CD8-positive, alpha-beta T cell (primary cell): ENCODE measurements at regions of chr16 and their contacts with region 1.

Region 1: GRCh38 chr16:50731130-50731988 is 10.5 kb upstream of the CYLD start:
- DNase-seq: peak in 2 of 9 experiments; percentile 35 to 54
- ATAC-seq: no peak
- H3K4me3 ChIP-seq: no peak overlapping the region
- H3K4me3 Mint-ChIP-seq: no peak overlapping the region
- H3K27ac ChIP-seq: no peak overlapping the region
- H3K27ac Mint-ChIP-seq: peak overlapping the region; percentile 50
- H3K4me1 ChIP-seq: peaks cover 4% of the 10 kb centered on the region
- H3K4me1 Mint-ChIP-seq: peaks cover 11% of the 10 kb centered on the region
- H3K27me3 ChIP-seq: no peaks in the 10 kb centered on the region
- H3K27me3 Mint-ChIP-seq: no peaks in the 10 kb centered on the region
- CTCF ChIP-seq: no peak

Region 2: DNA sequence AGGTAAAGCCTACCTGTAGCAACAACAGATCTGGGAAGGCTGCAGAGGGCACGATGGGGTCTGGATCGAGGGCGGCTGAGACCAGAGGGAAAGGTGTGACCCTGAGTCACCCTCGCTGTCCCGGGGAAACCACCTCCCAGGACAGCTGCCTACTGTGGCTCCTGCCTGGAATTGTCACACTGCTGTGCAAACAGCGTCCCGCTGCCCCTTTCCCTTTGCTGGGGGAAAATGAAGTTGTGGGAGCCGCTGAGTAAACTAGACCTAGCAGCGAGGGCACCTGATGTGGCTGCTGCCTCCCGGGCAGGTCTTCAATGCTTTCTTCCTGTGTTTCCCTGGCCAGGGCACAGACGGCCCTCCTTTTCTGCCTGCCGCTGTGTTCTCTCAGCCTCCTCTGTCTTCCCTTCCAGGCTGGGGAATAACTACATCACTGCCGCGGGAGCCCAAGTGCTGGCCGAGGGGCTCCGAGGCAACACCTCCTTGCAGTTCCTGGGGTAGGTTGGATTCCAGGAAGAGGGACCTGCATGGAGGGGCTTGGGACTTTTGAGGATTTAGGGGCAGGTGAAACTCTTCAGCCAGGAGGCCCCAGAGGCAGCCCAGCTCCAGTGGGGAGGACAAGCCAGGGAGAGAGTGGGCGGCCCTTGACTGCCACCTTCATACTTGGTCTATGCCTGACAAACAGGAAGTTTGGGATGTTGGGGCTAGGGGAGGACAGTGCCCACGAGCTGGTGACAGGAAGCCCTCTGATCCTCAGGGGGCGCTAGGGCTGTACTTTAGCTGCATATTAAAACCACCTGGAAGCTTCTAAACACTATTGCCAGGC is 11.6 kb before region 1 on chr16:
- CTCF ChIA-PET with region 1: interaction called, 14 read pairs
- POLR2A ChIA-PET with region 1: no interaction called
- intact Hi-C with region 1: no loop called
- DNase-seq: peak in 6 of 9 experiments; percentile 23 to 71 (median 46)
- ATAC-seq: peak; percentile 67
- H3K4me3 ChIP-seq: no peak overlapping the region
- H3K4me3 Mint-ChIP-seq: no peak overlapping the region
- H3K27ac ChIP-seq: no peak overlapping the region
- H3K27ac Mint-ChIP-seq: no peak overlapping the region
- H3K4me1 ChIP-seq: peaks cover 26% of the 10 kb centered on the region
- H3K4me1 Mint-ChIP-seq: peaks cover 37% of the 10 kb centered on the region
- H3K27me3 ChIP-seq: no peaks in the 10 kb centered on the region
- H3K27me3 Mint-ChIP-seq: no peaks in the 10 kb centered on the region
- CTCF ChIP-seq: peak; percentile 15